ENCODE measurements at regions of chr3 and their contacts with region 1.

Region 1: GRCh38 chr3:69294014-69294775 is 91.7 kb downstream of the FRMD4B start:
- DNase-seq: no peak
- ATAC-seq: peak in 4 of 8 donors; percentile 29 to 51 (median 32)
- H3K4me3 ChIP-seq: no peak overlapping the region
- H3K27ac ChIP-seq: peak overlapping the region in 4 of 10 donors; percentile 9 to 60 (median 27)
- H3K4me1 ChIP-seq: peaks cover 3 to 40% (median 19%) of the 10 kb centered on the region in 9 donors
- H3K27me3 ChIP-seq: no peaks in the 10 kb centered on the region
- CTCF ChIP-seq: no peak

Region 2: GRCh38 chr3:68893600-68894239 is 400.5 kb before region 1 on chr3:
- intact Hi-C with region 1: no loop called
- DNase-seq: no peak
- ATAC-seq: no peak
- H3K4me3 ChIP-seq: no peak overlapping the region
- H3K27ac ChIP-seq: no peak overlapping the region
- H3K4me1 ChIP-seq: no peaks in the 10 kb centered on the region
- H3K27me3 ChIP-seq: peaks cover 0 to 36% (median 11%) of the 10 kb centered on the region in 7 donors
- CTCF ChIP-seq: peak; percentile 9 to 67 (median 57)

Region 3: DNA sequence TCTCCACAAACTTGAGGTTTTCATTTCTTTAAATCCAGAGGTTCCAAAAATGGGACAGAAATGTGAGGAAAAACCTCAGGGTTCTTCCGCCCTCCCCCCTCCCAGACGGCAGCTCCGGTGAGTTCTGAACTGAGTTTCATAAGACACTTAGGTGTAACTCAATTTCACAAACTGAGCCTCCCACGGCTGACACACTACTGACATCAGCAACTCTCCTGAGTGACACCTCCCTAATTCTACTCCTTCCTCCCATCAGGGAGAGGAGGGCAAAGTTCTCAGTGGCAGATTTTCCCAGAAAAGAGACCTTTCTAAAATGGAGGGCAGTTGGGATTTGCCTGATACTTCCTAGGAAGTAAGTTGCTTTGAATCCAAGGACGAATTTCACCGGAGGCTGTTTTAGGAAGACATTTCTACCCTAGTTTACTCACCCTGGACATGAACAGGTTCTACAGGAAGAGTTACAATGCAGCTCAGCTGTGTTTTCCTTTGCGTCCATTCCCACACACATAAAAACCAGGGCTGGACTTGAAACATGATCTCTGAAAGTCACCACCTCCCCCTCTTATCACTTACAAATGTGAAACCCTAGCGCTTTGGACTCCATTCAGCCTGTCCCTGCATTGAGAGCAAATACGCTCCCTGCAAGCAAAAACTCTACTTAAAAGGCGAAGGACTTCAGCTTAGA is 93.7 kb before region 1 on chr3:
- intact Hi-C with region 1: loop called in 2 of 10 experiments (anchors 5 kb)
- DNase-seq: peak in 1 of 2 donors; percentile 35
- ATAC-seq: peak; percentile 61 to 87 (median 75)
- H3K4me3 ChIP-seq: peak overlapping the region; percentile 10 to 49 (median 40)
- H3K27ac ChIP-seq: peak overlapping the region in 9 of 10 donors; percentile 28 to 81 (median 70)
- H3K4me1 ChIP-seq: peaks cover 0 to 45% (median 26%) of the 10 kb centered on the region in 9 donors
- H3K27me3 ChIP-seq: no peaks in the 10 kb centered on the region
- CTCF ChIP-seq: no peak

Region 4: GRCh38 chr3:69231929-69232440 is 62.2 kb before region 1 on chr3:
- intact Hi-C with region 1: loop called in 1 of 10 experiments (anchors 10 kb)
- DNase-seq: no peak
- ATAC-seq: peak in 4 of 8 donors; percentile 29 to 69 (median 58)
- H3K4me3 ChIP-seq: no peak overlapping the region
- H3K27ac ChIP-seq: no peak overlapping the region
- H3K4me1 ChIP-seq: peaks cover 0 to 17% (median 9%) of the 10 kb centered on the region in 9 donors
- H3K27me3 ChIP-seq: no peaks in the 10 kb centered on the region
- CTCF ChIP-seq: no peak